MCF 10A (cell line): ENCODE measurements at regions of chr15 and their contacts with region 1.

Region 1: GRCh38 chr15:90412356-90413194 is 24.5 kb downstream of the IQGAP1 start:
- DNase-seq: peak; percentile 46
- H3K4me3 Mint-ChIP-seq: peak overlapping the region; percentile 8
- H3K27ac Mint-ChIP-seq: peak overlapping the region; percentile 65
- H3K4me1 Mint-ChIP-seq: peaks cover 57% of the 10 kb centered on the region
- H3K27me3 Mint-ChIP-seq: no peaks in the 10 kb centered on the region
- CTCF ChIP-seq: no peak

Region 2: DNA sequence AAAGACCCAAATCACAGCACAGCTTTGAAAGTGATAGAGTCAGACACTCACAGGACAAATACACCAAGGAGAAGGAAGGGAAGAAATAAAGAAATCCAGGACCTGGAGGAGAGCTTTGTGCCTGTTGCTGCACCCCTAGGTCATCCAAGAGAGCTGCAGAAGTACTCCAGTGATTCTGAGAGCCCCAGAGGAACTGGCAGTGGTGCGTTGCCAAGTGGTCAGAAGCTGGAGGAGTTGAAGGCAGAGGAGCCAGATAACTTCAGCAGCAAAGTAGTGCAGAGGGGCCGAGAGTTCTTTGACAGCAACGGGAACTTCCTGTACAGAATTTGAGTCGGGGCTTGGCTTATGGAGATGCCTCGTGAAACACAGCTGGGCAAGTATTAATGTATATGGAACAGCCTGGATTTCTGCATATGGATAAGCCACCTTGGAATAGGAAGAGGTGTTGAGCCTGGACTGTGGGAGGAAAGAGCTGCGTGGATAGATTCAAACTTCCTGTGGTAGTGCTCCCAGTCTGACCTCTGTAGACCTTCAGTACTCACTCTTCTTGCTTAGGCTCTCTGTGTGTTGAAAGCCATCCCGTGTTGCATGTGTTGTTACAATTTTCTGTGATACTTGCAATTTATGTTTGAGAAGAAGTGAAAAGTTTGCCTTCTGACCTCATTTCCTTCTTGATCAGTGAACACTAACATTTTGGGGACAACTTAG is 141.0 kb before region 1 on chr15:
- CTCF ChIA-PET with region 1: no interaction called
- POLR2A ChIA-PET with region 1: no interaction called
- intact Hi-C with region 1: no loop called
- DNase-seq: no peak
- H3K4me3 Mint-ChIP-seq: no peak overlapping the region
- H3K27ac Mint-ChIP-seq: no peak overlapping the region
- H3K4me1 Mint-ChIP-seq: peaks cover 23% of the 10 kb centered on the region
- H3K27me3 Mint-ChIP-seq: no peaks in the 10 kb centered on the region
- CTCF ChIP-seq: no peak

Region 3: GRCh38 chr15:90336705-90337141 is 75.9 kb before region 1 on chr15:
- CTCF ChIA-PET with region 1: no interaction called
- POLR2A ChIA-PET with region 1: no interaction called
- intact Hi-C with region 1: no loop called
- DNase-seq: peak; percentile 84
- H3K4me3 Mint-ChIP-seq: no peak overlapping the region
- H3K27ac Mint-ChIP-seq: no peak overlapping the region
- H3K4me1 Mint-ChIP-seq: peaks cover 16% of the 10 kb centered on the region
- H3K27me3 Mint-ChIP-seq: no peaks in the 10 kb centered on the region
- CTCF ChIP-seq: no peak

Region 4: DNA sequence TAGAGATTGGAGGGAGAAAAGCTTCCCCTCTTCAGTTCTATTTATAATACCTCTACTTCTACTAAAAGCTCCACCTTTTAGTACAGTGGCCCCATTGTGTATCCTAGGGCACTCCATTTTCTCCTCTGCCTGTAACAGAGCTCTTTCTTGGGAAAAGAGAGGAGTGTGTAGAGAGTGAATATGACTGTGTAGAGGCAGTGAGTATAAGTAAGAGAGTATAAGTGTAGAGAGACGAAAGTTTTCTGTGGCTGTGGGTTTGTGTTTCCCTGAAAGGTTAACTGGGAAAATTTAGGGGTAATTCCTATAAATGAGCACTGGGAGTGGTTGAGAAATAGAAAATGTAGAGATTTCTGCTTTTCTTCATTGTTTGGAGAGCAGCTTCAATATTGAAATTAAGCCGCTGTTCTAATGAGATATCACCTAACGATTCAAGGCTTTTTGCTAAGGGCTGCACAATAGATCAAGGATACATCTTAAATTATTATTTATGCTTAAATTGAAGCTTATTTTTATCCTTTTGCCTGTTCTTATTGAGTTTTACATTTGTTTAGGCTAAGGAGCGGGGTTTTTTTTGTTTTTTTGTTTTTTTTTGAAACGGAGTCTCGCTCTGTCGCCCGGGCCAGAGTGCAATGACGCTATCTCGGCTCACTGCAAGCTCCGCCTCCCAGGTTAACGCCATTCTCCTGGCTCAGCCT is 17.7 kb before region 1 on chr15:
- CTCF ChIA-PET with region 1: interaction called, 5 read pairs
- POLR2A ChIA-PET with region 1: interaction called, 159 read pairs
- intact Hi-C with region 1: no loop called
- DNase-seq: no peak
- H3K4me3 Mint-ChIP-seq: no peak overlapping the region
- H3K27ac Mint-ChIP-seq: peak overlapping the region; percentile 84
- H3K4me1 Mint-ChIP-seq: peaks cover 54% of the 10 kb centered on the region
- H3K27me3 Mint-ChIP-seq: no peaks in the 10 kb centered on the region
- CTCF ChIP-seq: no peak